ENCODE measurements at regions of chr1 and their contacts with region 1.

Region 1: DNA sequence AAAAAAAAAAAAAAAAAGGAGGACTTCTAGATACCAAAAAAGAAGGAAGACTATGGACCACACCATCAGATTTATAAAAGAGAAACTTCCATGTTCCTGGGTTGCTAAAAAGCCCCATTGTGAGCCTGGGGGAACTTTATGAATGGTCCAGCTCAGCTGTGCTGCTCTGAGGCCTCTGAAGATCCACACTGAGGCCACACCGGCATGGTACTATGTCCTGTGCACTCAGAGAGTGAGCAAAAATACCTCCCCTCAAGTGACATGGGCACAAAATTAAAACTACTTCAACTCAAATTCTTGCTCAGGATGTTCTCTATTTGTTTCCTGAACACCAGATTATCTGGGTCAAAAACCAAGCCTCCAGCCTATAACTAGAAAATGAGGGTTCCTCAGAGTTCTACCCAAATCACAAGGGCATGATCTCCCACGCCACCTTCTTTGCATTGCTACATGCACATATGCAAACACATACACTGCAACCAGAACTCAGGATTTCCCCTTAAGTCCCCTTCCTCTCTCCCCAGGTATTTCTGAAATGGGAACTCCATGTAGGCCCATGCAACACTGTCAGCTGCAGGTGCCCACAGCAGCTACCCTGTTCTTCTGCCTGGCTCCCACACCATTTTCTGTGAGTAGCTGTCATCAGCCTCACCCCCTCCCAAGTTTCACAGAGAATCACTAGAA is 94.4 kb downstream of the SH3GLB1 start:
- DNase-seq: no peak
- ATAC-seq: no peak
- H3K4me3 ChIP-seq: no peak overlapping the region
- H3K27ac ChIP-seq: no peak overlapping the region
- H3K4me1 ChIP-seq: peaks cover under 1% of the 10 kb centered on the region
- H3K27me3 ChIP-seq: no peaks in the 10 kb centered on the region
- CTCF ChIP-seq: no peak

Region 2: GRCh38 chr1:86782482-86782881 is 16.3 kb before region 1 on chr1:
- intact Hi-C with region 1: loop called in 1 of 2 experiments (anchors 2 kb)
- DNase-seq: no peak
- ATAC-seq: no peak
- H3K4me3 ChIP-seq: no peak overlapping the region
- H3K27ac ChIP-seq: no peak overlapping the region
- H3K4me1 ChIP-seq: peaks cover 6% of the 10 kb centered on the region
- H3K27me3 ChIP-seq: no peaks in the 10 kb centered on the region
- CTCF ChIP-seq: no peak

Region 3: GRCh38 chr1:86841116-86841515 is 42.4 kb after region 1 on chr1:
- intact Hi-C with region 1: loop called in 1 of 2 experiments (anchors 1 kb)
- DNase-seq: no peak
- ATAC-seq: no peak
- H3K4me3 ChIP-seq: no peak overlapping the region
- H3K27ac ChIP-seq: no peak overlapping the region
- H3K4me1 ChIP-seq: no peaks in the 10 kb centered on the region
- H3K27me3 ChIP-seq: no peaks in the 10 kb centered on the region
- CTCF ChIP-seq: no peak

Region 4: GRCh38 chr1:86887479-86888162 is 88.9 kb after region 1 on chr1:
- intact Hi-C with region 1: no loop called
- DNase-seq: no peak
- ATAC-seq: no peak
- H3K4me3 ChIP-seq: no peak overlapping the region
- H3K27ac ChIP-seq: no peak overlapping the region
- H3K4me1 ChIP-seq: no peaks in the 10 kb centered on the region
- H3K27me3 ChIP-seq: no peaks in the 10 kb centered on the region
- CTCF ChIP-seq: no peak

Measured in psoas muscle (tissue), 8 donors.